ENCODE measurements at regions of chr10 and their contacts with region 1.

Region 1: DNA sequence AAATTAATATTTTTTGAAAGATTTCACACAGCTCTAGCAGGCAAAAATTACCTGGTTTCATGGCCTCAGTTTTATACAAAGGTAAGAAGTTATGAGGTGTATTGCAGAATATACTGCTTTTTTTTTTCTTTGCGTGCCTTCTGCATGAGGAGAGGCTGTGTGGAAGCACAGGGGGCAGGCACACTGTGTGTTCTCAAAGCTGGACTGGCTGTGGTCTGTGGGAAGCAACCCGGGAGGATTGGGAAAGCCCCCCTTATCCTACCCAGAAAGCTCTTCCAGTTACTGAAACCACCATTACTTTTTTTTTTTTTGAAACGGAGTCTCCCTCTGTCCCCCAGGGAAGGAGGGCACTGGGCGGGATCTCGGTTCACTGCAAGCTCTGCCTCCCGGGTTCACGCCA is 25.0 kb downstream of the ADARB2 start:
- DNase-seq: no peak
- H3K4me3 ChIP-seq: no peak overlapping the region
- H3K27ac ChIP-seq: no peak overlapping the region
- H3K4me1 ChIP-seq: no peaks in the 10 kb centered on the region
- H3K27me3 ChIP-seq: no peaks in the 10 kb centered on the region
- CTCF ChIP-seq: no peak

Region 2: DNA sequence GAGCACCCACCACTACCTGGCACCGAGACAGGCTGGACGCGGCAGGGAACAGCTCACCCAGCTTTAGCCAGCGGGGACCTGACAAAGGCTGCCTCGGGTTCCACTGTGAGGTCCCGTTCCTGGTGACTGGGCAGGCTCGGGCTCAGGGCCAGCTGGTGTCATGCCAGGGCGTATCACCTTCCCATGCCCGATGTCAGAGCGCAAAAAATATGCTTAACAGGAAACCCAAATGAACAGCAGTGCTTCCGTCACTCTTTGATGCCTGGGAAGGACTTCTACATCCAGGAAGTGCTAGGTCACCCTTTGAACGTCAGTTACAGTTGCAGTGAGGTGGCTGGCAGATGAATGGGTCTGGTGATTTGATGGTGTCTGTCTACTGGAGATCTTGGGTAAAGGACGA is 81.0 kb before region 1 on chr10:
- CTCF ChIA-PET with region 1: no interaction called
- dilution Hi-C with region 1: loop called (anchors 5 kb)
- in situ Hi-C with region 1: no loop called
- intact Hi-C with region 1: no loop called
- DNase-seq: no peak
- H3K4me3 ChIP-seq: no peak overlapping the region
- H3K27ac ChIP-seq: no peak overlapping the region
- H3K4me1 ChIP-seq: no peaks in the 10 kb centered on the region
- H3K27me3 ChIP-seq: no peaks in the 10 kb centered on the region
- CTCF ChIP-seq: no peak